T-cell (primary cell): ENCODE measurements at regions of chr13 and their contacts with region 1.

Region 1: GRCh38 chr13:99501184-99501847 is at the start of gene TM9SF2:
- DNase-seq: peak; percentile 87 to 99 (median 93)
- ATAC-seq: peak; percentile 59 to 67 (median 62)
- H3K4me3 ChIP-seq: peak within 1 kb of the TSS; percentile 94 to 96
- H3K4me3 Mint-ChIP-seq: peak within 1 kb of the TSS; percentile 96 to 98 (median 96)
- H3K27ac ChIP-seq: peak within 1 kb of the TSS; percentile 86
- H3K27ac Mint-ChIP-seq: peak within 1 kb of the TSS; percentile 95 to 96
- H3K4me1 ChIP-seq: peaks cover 60 to 62% of the 10 kb centered on the region in 2 experiments
- H3K4me1 Mint-ChIP-seq: peaks cover 78 to 89% (median 85%) of the 10 kb centered on the region in 3 donors
- H3K27me3 ChIP-seq: no peaks in the 10 kb centered on the region
- H3K27me3 Mint-ChIP-seq: no peaks in the 10 kb centered on the region
- total RNA-seq, gene TM9SF2: 43.2 to 54.0 (median 48.8) TPM

Region 2: GRCh38 chr13:98842864-98843481 is 658.3 kb before region 1 on chr13:
- CTCF ChIA-PET with region 1: no interaction called
- POLR2A ChIA-PET with region 1: no interaction called
- DNase-seq: peak in 34 of 35 experiments; percentile 22 to 69 (median 48)
- ATAC-seq: peak; percentile 57 to 82 (median 74)
- H3K4me3 ChIP-seq: no peak overlapping the region
- H3K4me3 Mint-ChIP-seq: no peak overlapping the region
- H3K27ac ChIP-seq: no peak overlapping the region
- H3K27ac Mint-ChIP-seq: peak overlapping the region in 1 of 2 donors; percentile 18
- H3K4me1 ChIP-seq: no peaks in the 10 kb centered on the region
- H3K4me1 Mint-ChIP-seq: peaks cover 0 to 9% (median 7%) of the 10 kb centered on the region in 3 donors
- H3K27me3 ChIP-seq: no peaks in the 10 kb centered on the region
- H3K27me3 Mint-ChIP-seq: no peaks in the 10 kb centered on the region

Region 3: DNA sequence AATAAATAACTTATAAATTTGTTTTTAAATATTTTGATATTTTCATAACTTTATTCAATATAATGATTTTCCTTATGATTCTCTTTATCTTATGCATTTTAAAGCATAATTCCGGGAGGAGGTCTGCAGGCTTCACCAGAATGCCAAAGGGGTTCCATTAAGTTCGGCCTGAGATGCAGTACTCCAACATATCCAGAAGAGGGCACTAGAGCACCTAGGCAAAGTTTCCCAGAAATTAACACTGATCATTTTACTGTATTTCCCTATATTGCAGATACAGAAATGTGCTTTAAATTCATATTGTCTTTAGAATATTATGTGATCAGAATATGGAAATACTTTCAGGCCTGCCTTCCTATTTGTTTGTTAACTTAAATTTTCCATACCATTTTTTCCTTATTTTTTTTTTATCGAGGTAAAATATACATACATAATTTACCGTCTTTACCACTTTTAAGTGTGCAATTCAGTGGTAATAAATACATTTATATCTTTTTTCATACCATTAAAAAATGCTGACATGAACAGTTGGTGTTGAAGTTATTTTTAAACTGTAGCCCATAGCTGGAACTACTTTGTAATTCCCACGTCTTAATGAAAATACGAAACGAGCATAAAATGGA is 58.9 kb before region 1 on chr13:
- CTCF ChIA-PET with region 1: interaction called, 8 to 17 read pairs
- POLR2A ChIA-PET with region 1: interaction called in 1 of 2 experiments, 3 read pairs
- DNase-seq: peak in 25 of 35 experiments; percentile 23 to 81 (median 44)
- ATAC-seq: peak in 3 of 4 experiments; percentile 53 to 76 (median 71)
- H3K4me3 ChIP-seq: no peak overlapping the region
- H3K4me3 Mint-ChIP-seq: no peak overlapping the region
- H3K27ac ChIP-seq: no peak overlapping the region
- H3K27ac Mint-ChIP-seq: no peak overlapping the region
- H3K4me1 ChIP-seq: peaks cover 0 to 2% of the 10 kb centered on the region in 2 experiments
- H3K4me1 Mint-ChIP-seq: peaks cover 5 to 7% (median 7%) of the 10 kb centered on the region in 3 donors
- H3K27me3 ChIP-seq: peaks cover 0 to 5% of the 10 kb centered on the region in 2 experiments
- H3K27me3 Mint-ChIP-seq: no peaks in the 10 kb centered on the region

Region 4: DNA sequence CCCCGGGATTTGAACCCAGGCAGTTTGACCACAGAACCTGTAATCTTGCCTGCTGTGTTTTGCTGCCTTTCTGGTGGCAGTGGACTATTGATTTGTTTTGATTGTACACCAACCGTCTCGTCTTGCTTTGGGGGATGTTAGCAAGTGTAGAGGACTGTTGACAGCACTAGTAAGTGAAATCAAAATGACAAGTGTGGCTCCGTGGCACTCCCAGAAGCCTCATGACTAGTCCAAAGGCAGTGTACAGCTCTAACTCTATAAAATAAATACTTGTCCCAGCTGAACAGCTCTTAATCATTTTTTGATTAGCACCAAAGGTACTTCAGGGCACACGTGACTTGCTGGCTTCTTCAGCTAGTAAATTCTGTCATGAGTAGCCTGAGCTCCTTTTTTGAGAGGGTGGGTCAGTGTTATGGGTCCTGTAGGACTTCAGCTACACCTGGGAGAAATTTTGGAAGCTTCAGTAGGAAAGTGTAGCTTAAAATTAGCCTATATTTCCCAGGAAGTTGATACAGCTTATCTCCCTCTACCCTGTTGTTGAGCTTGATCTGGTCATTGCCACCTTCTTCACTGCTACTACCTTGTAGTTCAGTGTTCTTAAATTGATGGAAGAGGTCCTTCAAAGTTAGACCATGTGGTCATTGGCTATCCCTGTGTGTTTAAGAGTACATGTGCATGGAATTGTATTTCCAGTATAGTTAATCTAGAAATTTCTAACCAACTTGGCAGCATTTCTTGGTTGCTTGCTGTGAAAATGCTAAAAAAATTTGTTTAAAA is 15.0 kb after region 1 on chr13:
- CTCF ChIA-PET with region 1: interaction called in 1 of 2 experiments, 11 read pairs
- POLR2A ChIA-PET with region 1: interaction called, 5 read pairs
- DNase-seq: no peak
- ATAC-seq: no peak
- H3K4me3 ChIP-seq: no peak overlapping the region
- H3K4me3 Mint-ChIP-seq: no peak overlapping the region
- H3K27ac ChIP-seq: no peak overlapping the region
- H3K27ac Mint-ChIP-seq: peak overlapping the region in 1 of 2 donors; percentile 2
- H3K4me1 ChIP-seq: peaks cover 0 to 8% of the 10 kb centered on the region in 2 experiments
- H3K4me1 Mint-ChIP-seq: peaks cover 52 to 58% (median 54%) of the 10 kb centered on the region in 3 donors
- H3K27me3 ChIP-seq: no peaks in the 10 kb centered on the region
- H3K27me3 Mint-ChIP-seq: no peaks in the 10 kb centered on the region